HAP-1 (cell line): ENCODE measurements at regions of chr4 and their contacts with region 1.

Region 1: DNA sequence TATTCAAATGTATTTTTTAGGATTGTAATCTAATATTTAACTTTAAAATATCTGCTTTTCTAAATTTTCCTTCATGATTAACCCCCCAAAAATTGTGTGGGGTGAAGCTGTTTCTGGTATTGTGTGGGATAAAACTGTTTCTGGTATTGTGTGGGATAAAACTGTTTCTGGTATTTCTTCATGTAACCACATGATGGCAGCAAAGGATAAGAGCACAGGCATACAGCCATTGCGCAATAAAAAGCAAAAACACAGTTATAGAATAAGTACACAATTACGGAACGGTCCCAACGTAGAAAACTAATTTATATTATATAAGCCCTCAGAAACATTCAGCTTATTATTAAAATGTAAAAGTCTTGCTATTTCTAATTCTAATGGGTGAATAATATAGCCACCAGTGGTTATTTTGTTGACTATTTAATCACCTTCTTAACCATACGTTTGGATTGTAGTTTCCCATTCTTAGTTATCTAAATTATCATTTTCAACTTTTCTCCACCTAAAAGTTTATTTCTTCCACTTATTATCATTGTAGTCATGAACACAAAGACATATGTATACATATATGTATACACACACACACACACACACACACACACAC is 333.9 kb upstream of the FSTL5 start:
- DNase-seq: peak in 1 of 2 experiments; percentile 59
- H3K4me3 ChIP-seq: no peak overlapping the region
- H3K4me1 ChIP-seq: no peaks in the 10 kb centered on the region
- H3K27me3 ChIP-seq: no peaks in the 10 kb centered on the region

Region 2: GRCh38 chr4:163048447-163048846 is 550.8 kb after region 1 on chr4:
- in situ Hi-C with region 1: no loop called
- DNase-seq: peak; percentile 38 to 48
- H3K4me3 ChIP-seq: no peak overlapping the region
- H3K4me1 ChIP-seq: peaks cover 8% of the 10 kb centered on the region; the same call in 1 of the 2 replicates
- H3K27me3 ChIP-seq: 0 out of 2 replicates have a peak, but pooled peaks cover 2% of the 10 kb centered on the region

Region 3: DNA sequence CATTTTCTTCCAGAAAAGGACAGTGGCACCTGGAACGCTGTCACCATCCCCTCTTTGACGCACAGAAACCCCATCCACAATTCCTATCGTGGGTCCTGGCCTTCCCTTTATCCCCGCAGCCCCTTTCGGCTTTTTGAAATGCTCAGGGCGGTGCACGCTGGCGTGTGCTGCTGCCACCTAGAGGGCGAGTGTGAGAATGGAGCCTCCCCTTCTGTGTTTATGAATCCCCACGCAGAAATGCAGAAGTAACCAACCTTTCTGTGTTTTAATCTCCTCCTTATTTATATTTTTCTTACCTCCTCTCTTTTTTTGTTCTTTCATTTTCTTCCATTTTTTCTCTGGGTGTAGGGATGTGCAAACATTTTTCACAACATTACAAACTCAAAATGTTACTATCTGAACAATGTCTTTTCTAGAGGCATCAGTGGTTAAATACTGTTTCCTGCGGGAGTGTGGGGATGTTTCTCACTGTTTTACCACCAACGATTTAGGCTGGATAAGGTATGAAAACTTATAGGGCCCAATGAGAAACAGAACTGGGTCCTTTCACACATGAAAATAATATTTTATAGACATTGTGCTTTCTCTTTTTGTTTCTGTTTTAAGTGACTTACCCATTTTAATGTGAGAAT is 1046.9 kb after region 1 on chr4:
- in situ Hi-C with region 1: loop called (anchors 25 kb)
- DNase-seq: peak; percentile 66 to 80
- H3K4me3 ChIP-seq: no peak overlapping the region
- H3K4me1 ChIP-seq: no peaks in the 10 kb centered on the region; the same call in 1 of the 2 replicates
- H3K27me3 ChIP-seq: no peaks in the 10 kb centered on the region